Activated T-helper 2 cell treated with anti-CD3 and anti-CD28 coated beads, Interferon-gamma antibody, Interleukin-2, Interleukin-4, amounts not matched to agents 10 μg/mL and 5 μg/mL and 100 μg/mL, durations not matched to agents 14 hours and 24 hours and 36 hours (primary cell): ENCODE measurements at regions of chr12 and their contacts with region 1.

Region 1: DNA sequence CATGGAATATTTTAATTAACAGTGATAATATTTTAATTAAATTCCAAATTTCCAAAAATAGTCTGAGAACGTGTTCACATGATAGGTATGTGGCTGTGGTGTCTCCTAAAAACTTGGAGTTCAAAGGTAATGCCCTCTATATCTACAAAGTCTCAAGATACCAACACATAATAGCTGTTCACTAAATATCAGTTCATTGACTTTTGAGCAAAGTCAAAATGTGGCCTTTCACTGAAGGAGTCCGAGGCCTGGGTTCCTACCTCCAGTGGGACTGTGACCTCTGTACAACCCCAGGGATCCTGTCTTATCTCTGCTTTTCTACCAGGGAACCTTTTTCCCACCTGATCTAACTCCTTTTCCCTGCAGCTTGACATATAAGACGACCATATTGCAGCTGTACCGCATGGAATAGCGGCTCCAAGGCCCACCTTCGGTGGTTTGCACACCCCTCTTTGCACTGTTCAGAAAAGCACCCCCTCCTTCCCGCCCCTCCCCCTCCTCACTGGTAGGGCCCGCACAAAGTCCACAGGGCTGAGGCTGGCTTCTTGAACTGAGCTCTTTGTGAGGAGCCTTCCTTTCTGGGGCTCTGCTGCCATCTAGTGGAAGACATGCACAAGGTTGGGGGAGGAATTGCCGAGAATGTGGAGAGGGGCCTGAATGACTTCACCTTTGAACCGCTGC is 3.1 kb downstream of the CCND2 start:
- DNase-seq: peak; percentile 79
- H3K4me3 Mint-ChIP-seq: peak overlapping the region; percentile 95
- H3K27ac Mint-ChIP-seq: peak overlapping the region; percentile 89
- H3K4me1 Mint-ChIP-seq: peaks cover 45% of the 10 kb centered on the region
- H3K27me3 Mint-ChIP-seq: no peaks in the 10 kb centered on the region

Region 2: GRCh38 chr12:3872800-3873636 is 403.6 kb before region 1 on chr12 and contains the start of gene PARP11:
- intact Hi-C with region 1: loop called (anchors 1 kb)
- DNase-seq: peak; percentile 97
- H3K4me3 Mint-ChIP-seq: peak within 1 kb of the TSS; percentile 98
- H3K27ac Mint-ChIP-seq: peak within 1 kb of the TSS; percentile 97
- H3K4me1 Mint-ChIP-seq: peaks cover 43% of the 10 kb centered on the region
- H3K27me3 Mint-ChIP-seq: no peaks in the 10 kb centered on the region
- total RNA-seq, gene PARP11: 15.3 and 16.0 TPM in 2 replicates

Region 3: DNA sequence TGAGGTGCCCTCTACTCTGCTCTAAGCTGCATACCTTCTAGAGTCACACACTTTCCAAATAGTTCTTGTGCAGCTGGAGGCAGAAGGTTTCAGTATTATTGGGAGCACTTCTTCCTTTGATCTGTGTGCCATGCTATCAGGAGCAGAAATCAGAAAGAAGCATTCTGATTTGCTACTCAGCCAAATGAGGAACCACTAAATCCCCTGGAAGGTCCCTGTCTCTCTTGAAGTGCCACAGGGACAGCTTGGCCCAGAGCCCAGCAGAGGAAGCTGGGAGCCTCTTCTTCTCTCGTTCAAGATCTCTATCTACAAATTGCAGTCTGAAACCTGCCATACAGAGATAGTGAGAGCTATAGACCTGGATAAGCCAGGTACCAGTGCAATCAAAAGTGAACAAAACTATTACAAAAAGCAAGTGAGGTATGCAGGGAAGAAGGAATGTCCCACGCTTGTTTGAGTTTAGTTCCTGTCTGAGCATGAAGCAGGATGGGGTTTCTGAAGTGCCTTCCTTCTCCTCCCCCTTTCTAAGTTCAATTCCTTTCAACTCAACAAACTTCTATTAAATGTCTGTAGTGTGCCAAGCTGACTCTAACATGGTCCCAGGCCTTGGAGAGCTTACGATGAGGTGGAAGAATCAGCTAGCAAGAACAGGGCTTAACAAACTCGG is 302.6 kb before region 1 on chr12:
- intact Hi-C with region 1: loop called (anchors 1 kb)
- DNase-seq: no peak
- H3K4me3 Mint-ChIP-seq: peak overlapping the region; percentile 30
- H3K27ac Mint-ChIP-seq: peak overlapping the region; percentile 84
- H3K4me1 Mint-ChIP-seq: peaks cover 63% of the 10 kb centered on the region
- H3K27me3 Mint-ChIP-seq: peaks cover 2% of the 10 kb centered on the region

Region 4: GRCh38 chr12:4030929-4031702 is 245.5 kb before region 1 on chr12:
- intact Hi-C with region 1: loop called (anchors 2 kb)
- DNase-seq: peak; percentile 69
- H3K4me3 Mint-ChIP-seq: peak overlapping the region; percentile 32
- H3K27ac Mint-ChIP-seq: no peak overlapping the region
- H3K4me1 Mint-ChIP-seq: peaks cover 31% of the 10 kb centered on the region
- H3K27me3 Mint-ChIP-seq: peaks cover 27% of the 10 kb centered on the region

Region 5: GRCh38 chr12:4118017-4118510 is 158.6 kb before region 1 on chr12:
- intact Hi-C with region 1: loop called (anchors 1 kb)
- DNase-seq: peak; percentile 9
- H3K4me3 Mint-ChIP-seq: peak overlapping the region; percentile 62
- H3K27ac Mint-ChIP-seq: peak overlapping the region; percentile 82
- H3K4me1 Mint-ChIP-seq: peaks cover 66% of the 10 kb centered on the region
- H3K27me3 Mint-ChIP-seq: no peaks in the 10 kb centered on the region

Region 6: GRCh38 chr12:4153343-4153892 is 123.2 kb before region 1 on chr12:
- intact Hi-C with region 1: loop called (anchors 1 kb)
- DNase-seq: peak; percentile 67
- H3K4me3 Mint-ChIP-seq: peak overlapping the region; percentile 49
- H3K27ac Mint-ChIP-seq: peak overlapping the region; percentile 95
- H3K4me1 Mint-ChIP-seq: peaks cover 73% of the 10 kb centered on the region
- H3K27me3 Mint-ChIP-seq: no peaks in the 10 kb centered on the region

Region 7: DNA sequence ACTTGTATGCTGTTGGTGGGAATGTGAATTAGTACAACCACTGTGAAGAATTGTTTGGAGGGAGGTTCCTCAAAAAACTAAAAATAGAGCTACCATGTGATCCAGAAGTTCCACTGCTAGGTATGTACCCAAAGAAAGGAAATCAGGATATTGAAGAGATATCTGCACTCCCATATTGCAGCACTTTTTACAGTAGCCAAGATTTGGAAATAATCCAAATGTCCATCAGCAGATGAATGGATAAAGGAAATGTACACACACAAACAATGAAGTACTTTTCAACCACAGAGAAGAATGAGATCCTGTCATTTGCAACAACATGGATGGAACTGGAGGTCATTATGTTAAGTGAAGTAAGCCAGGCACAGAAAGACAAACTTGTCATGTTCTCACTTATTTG is 70.3 kb after region 1 on chr12:
- intact Hi-C with region 1: no loop called
- DNase-seq: no peak
- H3K4me3 Mint-ChIP-seq: no peak overlapping the region
- H3K27ac Mint-ChIP-seq: no peak overlapping the region
- H3K4me1 Mint-ChIP-seq: peaks cover 1% of the 10 kb centered on the region
- H3K27me3 Mint-ChIP-seq: no peaks in the 10 kb centered on the region

Region 8: GRCh38 chr12:4829161-4829792 is 552.6 kb after region 1 on chr12:
- intact Hi-C with region 1: loop called (anchors 5 kb)
- DNase-seq: peak; percentile 17
- H3K4me3 Mint-ChIP-seq: peak overlapping the region; percentile 92
- H3K27ac Mint-ChIP-seq: peak overlapping the region; percentile 99
- H3K4me1 Mint-ChIP-seq: peaks cover 77% of the 10 kb centered on the region
- H3K27me3 Mint-ChIP-seq: no peaks in the 10 kb centered on the region